HepG2 (cell line): ENCODE measurements at regions of chr12 and their contacts with region 1.

Region 1: DNA sequence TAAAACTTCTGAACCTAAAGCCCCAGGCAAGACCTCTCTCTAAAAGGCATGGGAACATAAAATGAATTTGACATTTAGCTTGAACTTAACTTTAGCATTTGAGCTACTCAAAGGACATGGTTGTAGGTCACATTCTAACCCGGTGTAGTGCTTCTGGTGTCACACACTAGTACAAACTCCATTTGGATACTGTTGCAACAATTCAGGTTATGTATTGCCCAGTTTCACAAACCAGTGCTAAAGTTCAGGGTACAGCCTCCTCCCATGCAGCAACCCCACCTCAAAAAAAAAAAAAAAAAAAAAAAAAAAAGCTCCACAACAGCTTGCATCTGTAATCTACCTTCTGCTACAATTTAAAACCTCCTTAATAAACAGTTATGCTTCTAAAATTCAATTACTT is 7.8 kb downstream of the PPTC7 start:
- DNase-seq: peak; percentile 97
- ATAC-seq: peak; percentile 95
- H3K4me3 ChIP-seq: peak overlapping the region in 1 of 3 experiments; percentile 40; a peak in 2 of 6 replicates
- H3K27ac ChIP-seq: peak overlapping the region; percentile 73
- H3K4me1 ChIP-seq: peaks cover 63% of the 10 kb centered on the region
- H3K27me3 ChIP-seq: no peaks in the 10 kb centered on the region
- CTCF ChIP-seq: no peak
- EP300 ChIP-seq: peak; percentile 90
- POLR2A ChIP-seq: no peak; a peak in 1 of 4 replicates
- RAD21 ChIP-seq: no peak

Region 2: DNA sequence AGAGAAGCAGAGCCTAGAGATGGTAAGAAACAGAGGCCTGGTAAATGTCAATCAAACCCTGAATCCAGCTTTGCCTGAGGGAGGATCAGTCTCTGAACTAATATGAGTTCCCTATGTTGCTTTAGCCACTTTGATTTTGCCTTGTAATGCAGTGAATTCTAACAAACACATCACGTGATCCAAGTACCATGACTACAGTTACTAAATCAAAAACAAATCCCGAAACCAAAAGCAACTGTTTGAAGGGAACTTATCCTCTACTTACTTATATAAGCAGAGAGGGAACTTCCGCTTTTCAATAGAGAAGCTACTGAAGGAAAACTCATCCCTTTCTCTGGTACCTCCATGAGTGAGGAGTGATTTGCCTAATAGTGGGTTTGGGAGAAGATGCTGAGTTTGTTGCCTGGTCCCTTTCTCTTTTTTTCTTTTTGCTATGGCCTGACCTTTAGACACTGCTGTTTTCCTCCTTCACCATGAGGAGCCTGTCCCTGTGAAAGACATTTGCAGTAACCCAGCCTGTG is 15.5 kb after region 1 on chr12:
- CTCF ChIA-PET with region 1: no interaction called
- POLR2A ChIA-PET with region 1: interaction called, 15 read pairs
- in situ Hi-C with region 1: no loop called
- intact Hi-C with region 1: loop called (anchors 1 kb)
- DNase-seq: peak; percentile 70
- ATAC-seq: peak; percentile 31; the same call in 2 of the 3 replicates
- H3K4me3 ChIP-seq: peak overlapping the region in 1 of 3 experiments; percentile 52; a peak in 1 of 6 replicates
- H3K27ac ChIP-seq: peak overlapping the region; percentile 80
- H3K4me1 ChIP-seq: peaks cover 36% of the 10 kb centered on the region
- H3K27me3 ChIP-seq: no peaks in the 10 kb centered on the region
- CTCF ChIP-seq: no peak
- EP300 ChIP-seq: no peak
- POLR2A ChIP-seq: no peak
- RAD21 ChIP-seq: no peak

Region 3: DNA sequence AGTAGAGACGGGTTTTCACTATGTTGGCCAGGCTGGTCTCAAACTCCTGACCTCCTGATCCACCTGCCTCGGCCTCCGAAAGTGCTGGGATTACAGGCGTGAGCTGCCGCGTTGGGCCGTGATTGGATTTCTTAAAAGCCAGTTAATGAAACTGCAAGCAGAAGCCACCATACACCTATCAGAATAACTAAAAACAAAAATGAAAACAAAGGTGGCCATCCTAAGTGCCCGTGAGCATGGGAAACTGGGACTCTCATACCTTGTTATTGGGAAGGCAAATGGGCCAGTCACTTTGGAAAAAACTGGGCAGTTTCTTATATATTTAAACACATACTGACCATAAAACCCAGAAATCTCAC is 30.9 kb after region 1 on chr12:
- CTCF ChIA-PET with region 1: no interaction called
- POLR2A ChIA-PET with region 1: no interaction called
- in situ Hi-C with region 1: no loop called
- intact Hi-C with region 1: no loop called
- DNase-seq: no peak
- ATAC-seq: no peak
- H3K4me3 ChIP-seq: peak overlapping the region in 1 of 3 experiments; percentile 46; a peak in 1 of 6 replicates
- H3K27ac ChIP-seq: no peak overlapping the region
- H3K4me1 ChIP-seq: peaks cover 7% of the 10 kb centered on the region; the same call in 1 of the 2 replicates
- H3K27me3 ChIP-seq: no peaks in the 10 kb centered on the region
- CTCF ChIP-seq: no peak
- EP300 ChIP-seq: no peak
- POLR2A ChIP-seq: no peak
- RAD21 ChIP-seq: no peak

Region 4: DNA sequence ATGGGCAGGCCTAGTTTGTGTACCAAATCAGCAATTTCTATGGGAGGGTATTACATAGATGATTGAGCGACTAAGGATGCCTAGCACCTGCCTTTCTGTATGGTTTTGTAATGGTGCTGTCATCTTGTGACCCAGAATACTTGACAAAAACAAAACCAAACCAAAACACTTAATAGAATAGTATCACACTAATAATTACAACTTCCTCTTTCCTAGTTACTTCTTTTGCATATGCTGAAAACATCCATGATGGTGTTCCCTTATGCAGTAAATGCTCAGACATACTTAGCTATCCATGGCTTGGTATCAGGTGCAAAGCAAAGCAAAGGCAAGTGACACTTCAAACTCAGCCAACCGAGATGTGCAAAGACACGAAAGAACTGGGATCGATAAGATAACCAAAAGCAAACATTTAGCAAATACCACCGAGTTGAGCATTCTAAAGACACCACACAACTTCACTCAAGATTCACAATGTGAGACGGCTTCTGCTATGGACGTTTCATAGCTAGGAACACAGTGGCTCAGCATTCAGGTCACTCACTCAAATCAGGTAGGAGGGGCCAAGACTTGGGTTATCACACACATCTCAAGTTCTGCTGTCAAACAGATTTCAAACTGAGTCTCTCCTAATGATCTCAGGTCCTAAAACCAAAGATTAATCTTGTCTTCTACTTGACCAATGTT is 143.0 kb after region 1 on chr12:
- CTCF ChIA-PET with region 1: no interaction called
- POLR2A ChIA-PET with region 1: no interaction called
- in situ Hi-C with region 1: no loop called
- intact Hi-C with region 1: no loop called
- DNase-seq: no peak
- ATAC-seq: no peak
- H3K4me3 ChIP-seq: no peak overlapping the region
- H3K27ac ChIP-seq: no peak overlapping the region
- H3K4me1 ChIP-seq: 0 out of 2 replicates have a peak, but pooled peaks cover 9% of the 10 kb centered on the region
- H3K27me3 ChIP-seq: no peaks in the 10 kb centered on the region
- CTCF ChIP-seq: no peak
- EP300 ChIP-seq: no peak
- POLR2A ChIP-seq: 0 out of 4 replicates have a peak, but pooled peaks of 1 of the 2 experiments have one; percentile 25
- RAD21 ChIP-seq: no peak